ENCODE measurements at regions of chr10 and their contacts with region 1.

Region 1: GRCh38 chr10:3605882-3606281 is 179.1 kb downstream of the KLF6 start:
- DNase-seq: no peak
- H3K4me3 Mint-ChIP-seq: no peak overlapping the region
- H3K27ac Mint-ChIP-seq: peak overlapping the region; percentile 36
- H3K4me1 Mint-ChIP-seq: peaks cover 6% of the 10 kb centered on the region
- H3K27me3 Mint-ChIP-seq: peaks cover 22% of the 10 kb centered on the region

Region 2: DNA sequence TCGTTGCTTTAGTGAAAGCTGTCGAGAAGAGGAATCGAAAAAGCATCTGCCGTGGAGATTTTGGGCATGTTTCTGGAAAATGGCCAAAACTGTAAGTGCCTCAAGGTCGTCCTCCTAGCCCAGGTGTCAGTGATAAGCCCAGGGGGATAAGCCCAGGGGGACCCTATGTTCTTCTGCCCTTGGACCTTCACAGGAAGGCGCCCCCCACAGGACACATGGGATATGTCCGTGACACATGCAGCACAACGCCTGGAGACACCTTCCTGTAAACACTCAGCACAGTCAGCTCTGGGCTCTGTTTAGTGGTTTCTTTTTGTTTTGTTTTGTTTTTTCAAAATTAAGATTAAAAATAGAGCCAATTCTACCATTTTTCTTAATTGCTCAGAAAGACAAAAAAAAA is 93.6 kb before region 1 on chr10:
- intact Hi-C with region 1: no loop called
- DNase-seq: no peak
- H3K4me3 Mint-ChIP-seq: no peak overlapping the region
- H3K27ac Mint-ChIP-seq: no peak overlapping the region
- H3K4me1 Mint-ChIP-seq: peaks cover 28% of the 10 kb centered on the region
- H3K27me3 Mint-ChIP-seq: peaks cover 13% of the 10 kb centered on the region

Region 3: DNA sequence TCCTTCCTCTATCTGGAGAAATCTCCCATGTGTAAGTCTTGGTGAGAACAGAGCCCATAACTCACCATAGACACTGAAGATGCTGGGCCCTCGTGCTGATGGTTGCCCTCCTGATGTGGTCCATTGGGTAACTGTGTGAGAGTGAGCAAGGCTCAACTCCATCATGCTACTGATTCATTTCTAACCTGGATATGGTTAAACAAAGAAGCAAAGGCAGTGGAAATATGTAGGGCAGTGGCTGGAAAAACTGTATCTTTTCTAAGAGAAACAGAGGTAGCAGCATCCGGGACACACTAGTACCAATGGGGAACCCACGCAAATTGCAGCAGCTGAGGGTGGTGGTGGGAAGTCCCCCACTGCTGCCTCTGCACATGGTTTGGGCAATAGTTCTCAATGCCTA is 42.6 kb before region 1 on chr10:
- intact Hi-C with region 1: loop called (anchors 5 kb)
- DNase-seq: no peak
- H3K4me3 Mint-ChIP-seq: no peak overlapping the region
- H3K27ac Mint-ChIP-seq: peak overlapping the region; percentile 49
- H3K4me1 Mint-ChIP-seq: peaks cover 28% of the 10 kb centered on the region
- H3K27me3 Mint-ChIP-seq: peaks cover 7% of the 10 kb centered on the region

Region 4: DNA sequence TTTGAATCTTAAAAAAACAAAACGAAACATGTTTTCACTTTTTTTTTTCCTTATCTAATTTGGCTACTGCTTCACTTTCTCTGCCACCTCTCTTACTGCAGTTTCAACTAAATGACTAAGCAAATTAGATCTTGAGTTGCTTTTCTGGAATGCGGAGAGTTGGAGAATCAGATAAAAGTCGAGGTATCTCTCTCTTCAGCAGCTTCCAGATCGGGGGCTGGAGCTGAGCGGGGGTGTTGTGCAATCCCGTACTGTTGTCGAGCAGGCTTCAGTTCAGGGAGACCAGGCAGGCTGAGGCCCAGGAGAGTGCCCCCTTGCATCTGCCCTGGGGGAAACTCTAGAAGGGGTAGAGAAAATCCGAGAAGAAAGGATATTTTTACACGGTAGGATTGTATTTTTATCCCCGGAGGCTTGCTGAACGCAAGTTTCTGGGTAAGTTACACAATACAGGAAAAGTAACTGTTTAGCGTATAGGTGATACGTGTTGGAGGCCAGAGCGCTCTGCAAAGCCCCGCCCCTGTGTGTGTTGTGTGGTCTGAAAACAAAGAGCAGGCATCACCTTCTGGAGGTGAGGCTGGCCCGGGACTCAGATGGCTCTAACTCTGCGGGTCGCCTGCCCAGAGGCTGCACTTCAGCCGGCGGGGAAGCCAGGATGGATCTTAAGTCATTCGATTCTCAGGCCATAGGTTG is 62.5 kb after region 1 on chr10:
- intact Hi-C with region 1: loop called (anchors 2 kb)
- DNase-seq: peak; percentile 55
- H3K4me3 Mint-ChIP-seq: peak overlapping the region; percentile 82
- H3K27ac Mint-ChIP-seq: peak overlapping the region; percentile 89
- H3K4me1 Mint-ChIP-seq: peaks cover 44% of the 10 kb centered on the region
- H3K27me3 Mint-ChIP-seq: peaks cover 3% of the 10 kb centered on the region

Region 5: GRCh38 chr10:3942937-3943489 is 337.1 kb after region 1 on chr10:
- intact Hi-C with region 1: no loop called
- DNase-seq: no peak
- H3K4me3 Mint-ChIP-seq: no peak overlapping the region
- H3K27ac Mint-ChIP-seq: peak overlapping the region; percentile 30
- H3K4me1 Mint-ChIP-seq: peaks cover 48% of the 10 kb centered on the region
- H3K27me3 Mint-ChIP-seq: no peaks in the 10 kb centered on the region